BJ (cell line): ENCODE measurements at regions of chr14 and their contacts with region 1.

Region 1: DNA sequence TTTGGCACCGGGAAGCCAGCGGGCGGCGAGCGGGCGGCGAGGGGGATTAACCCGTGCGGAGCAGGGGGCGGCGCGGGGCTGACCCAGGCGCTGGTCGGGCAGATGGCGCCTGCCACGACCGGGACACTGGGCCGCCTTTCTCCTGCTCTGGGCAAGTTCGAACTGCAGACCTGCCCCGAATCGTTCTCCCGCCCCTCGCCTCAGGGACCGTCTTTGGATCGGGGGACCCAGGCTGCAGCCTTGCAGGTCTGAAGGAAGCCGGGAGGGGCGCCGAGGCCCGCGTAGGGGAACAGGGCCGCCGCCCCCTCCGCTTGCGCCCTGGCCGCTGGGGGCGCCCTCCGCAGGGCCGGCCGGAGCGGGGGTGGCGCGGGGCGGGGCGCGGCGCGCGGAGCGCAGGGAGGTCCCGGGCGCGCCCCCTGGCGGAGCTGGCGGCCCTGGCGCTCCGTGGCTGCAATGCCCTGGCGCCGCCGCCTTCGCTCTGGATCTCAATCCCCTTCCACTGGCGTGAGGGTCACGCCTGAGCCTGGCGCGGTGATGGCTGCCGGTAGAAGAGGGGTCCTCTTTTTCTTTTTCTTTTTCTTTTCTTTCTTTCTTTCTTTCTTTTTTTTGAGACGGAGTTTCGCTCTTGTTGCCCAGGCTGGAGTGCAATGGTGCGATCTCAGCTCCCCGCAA is 449 bp upstream of the LTBP2 start:
- DNase-seq: no peak
- H3K4me3 ChIP-seq: peak overlapping the region; percentile 69
- H3K27me3 ChIP-seq: no peaks in the 10 kb centered on the region
- CTCF ChIP-seq: peak; percentile 62

Region 2: DNA sequence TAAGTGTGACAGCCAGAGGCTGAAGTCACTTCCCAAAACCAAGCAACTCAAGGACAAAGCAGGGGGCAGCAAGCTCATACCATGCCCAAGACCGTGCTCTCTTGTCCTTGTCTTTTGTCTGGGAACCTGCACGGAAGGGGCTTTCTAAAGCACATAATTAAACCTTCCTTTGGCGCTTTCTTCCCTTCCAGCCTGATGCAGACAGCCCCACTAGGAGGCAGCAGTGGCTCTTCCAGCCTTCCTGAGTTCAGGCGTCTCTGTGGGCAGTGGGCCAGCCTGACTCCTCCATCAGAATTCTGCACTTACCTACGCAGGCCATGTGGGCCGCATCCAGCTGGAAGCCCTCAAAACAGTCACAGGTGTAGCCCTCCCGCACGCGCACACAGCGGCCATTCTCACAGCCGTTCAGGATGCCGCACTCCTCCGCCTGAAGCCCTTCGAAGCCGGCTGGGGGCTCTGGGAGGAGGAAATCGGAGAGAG is 111.3 kb before region 1 on chr14:
- CTCF ChIA-PET with region 1: interaction called, 66 read pairs
- POLR2A ChIA-PET with region 1: no interaction called
- DNase-seq: no peak
- H3K4me3 ChIP-seq: no peak overlapping the region
- H3K27me3 ChIP-seq: no peaks in the 10 kb centered on the region
- CTCF ChIP-seq: peak; percentile 92

Region 3: DNA sequence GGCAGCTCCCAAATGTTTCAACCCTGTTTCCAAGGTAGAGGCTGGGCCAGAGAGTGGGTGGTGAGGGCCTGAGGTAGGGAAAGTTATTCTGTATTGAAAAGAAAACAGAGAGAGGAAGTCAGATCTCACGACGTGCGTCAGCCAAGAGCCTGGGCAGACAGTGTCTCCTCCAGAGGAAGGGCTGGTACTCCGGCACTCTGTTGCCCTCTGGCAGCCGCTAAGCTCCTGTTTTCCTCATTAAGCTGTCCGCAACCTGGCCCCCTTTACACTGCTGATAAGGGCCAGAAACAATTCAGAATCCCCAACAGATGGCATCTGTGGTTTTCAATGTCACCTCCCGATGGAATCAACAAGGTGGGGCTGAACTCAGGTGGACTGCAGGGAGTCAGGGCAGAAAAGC is 25.6 kb after region 1 on chr14:
- CTCF ChIA-PET with region 1: interaction called, 24 read pairs
- POLR2A ChIA-PET with region 1: interaction called, 10 read pairs
- DNase-seq: no peak
- H3K4me3 ChIP-seq: no peak overlapping the region
- H3K27me3 ChIP-seq: no peaks in the 10 kb centered on the region
- CTCF ChIP-seq: no peak

Region 4: DNA sequence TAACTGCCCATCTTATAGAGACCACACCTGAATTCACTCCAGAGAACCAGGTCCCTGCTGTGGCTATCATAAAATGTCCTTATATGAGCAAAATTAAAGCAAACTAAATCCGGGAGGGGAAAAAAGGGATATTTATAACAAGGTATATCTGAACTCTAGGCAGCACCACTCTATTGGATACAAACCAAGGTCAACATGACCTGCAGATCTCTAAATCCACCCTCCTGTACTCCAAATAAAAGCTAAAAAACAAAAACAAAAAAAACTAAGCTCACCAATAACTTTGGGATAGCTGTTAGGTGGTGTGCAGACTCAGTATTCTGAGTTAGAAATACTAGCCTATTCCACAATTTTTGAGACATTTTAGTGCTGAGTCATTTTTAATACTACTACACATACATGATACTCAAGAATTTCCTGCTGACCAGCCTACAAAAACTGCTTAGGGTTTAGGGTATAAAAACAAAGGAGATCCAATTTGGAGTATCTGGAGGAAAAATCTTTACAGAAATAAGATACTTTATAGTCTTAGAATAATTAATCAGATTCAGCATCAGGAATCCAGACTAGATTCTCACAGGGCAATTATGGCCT is 46.1 kb after region 1 on chr14:
- CTCF ChIA-PET with region 1: interaction called, 16 read pairs
- POLR2A ChIA-PET with region 1: no interaction called
- DNase-seq: peak; percentile 30
- H3K4me3 ChIP-seq: no peak overlapping the region
- H3K27me3 ChIP-seq: no peaks in the 10 kb centered on the region
- CTCF ChIP-seq: no peak

Region 5: GRCh38 chr14:74762917-74763802 is 150.7 kb after region 1 on chr14 and contains the start of gene YLPM1:
- CTCF ChIA-PET with region 1: interaction called, 26 read pairs
- POLR2A ChIA-PET with region 1: no interaction called
- DNase-seq: peak; percentile 78
- H3K4me3 ChIP-seq: peak within 1 kb of the TSS; percentile 96
- H3K27me3 ChIP-seq: no peaks in the 10 kb centered on the region
- CTCF ChIP-seq: peak; percentile 67
- polyA plus RNA-seq, gene YLPM1: 5.5 and 7.2 TPM in 2 replicates

Region 6: DNA sequence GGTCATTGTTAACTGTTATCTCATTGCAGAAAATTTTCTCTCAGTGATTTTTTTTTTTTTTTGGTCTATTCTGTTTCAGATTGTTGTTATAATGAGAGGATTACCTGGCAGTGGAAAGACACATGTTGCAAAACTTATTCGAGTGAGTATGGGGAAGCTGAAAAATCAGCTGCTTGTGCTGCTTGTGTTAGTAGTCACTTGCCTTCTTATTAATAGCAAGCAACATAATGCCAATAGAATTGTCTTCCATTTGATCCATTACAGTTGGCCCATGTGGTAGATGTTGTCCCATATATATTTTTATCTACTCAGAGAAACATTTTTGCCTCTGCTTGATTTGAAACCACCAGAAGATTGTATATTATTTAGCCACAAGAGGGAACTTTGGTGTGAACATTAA is 203.6 kb after region 1 on chr14:
- CTCF ChIA-PET with region 1: interaction called, 10 read pairs
- POLR2A ChIA-PET with region 1: no interaction called
- DNase-seq: no peak
- H3K4me3 ChIP-seq: no peak overlapping the region
- H3K27me3 ChIP-seq: no peaks in the 10 kb centered on the region
- CTCF ChIP-seq: no peak